AG04449 (cell line): ENCODE measurements at regions of chr6 and their contacts with region 1.

Region 1: DNA sequence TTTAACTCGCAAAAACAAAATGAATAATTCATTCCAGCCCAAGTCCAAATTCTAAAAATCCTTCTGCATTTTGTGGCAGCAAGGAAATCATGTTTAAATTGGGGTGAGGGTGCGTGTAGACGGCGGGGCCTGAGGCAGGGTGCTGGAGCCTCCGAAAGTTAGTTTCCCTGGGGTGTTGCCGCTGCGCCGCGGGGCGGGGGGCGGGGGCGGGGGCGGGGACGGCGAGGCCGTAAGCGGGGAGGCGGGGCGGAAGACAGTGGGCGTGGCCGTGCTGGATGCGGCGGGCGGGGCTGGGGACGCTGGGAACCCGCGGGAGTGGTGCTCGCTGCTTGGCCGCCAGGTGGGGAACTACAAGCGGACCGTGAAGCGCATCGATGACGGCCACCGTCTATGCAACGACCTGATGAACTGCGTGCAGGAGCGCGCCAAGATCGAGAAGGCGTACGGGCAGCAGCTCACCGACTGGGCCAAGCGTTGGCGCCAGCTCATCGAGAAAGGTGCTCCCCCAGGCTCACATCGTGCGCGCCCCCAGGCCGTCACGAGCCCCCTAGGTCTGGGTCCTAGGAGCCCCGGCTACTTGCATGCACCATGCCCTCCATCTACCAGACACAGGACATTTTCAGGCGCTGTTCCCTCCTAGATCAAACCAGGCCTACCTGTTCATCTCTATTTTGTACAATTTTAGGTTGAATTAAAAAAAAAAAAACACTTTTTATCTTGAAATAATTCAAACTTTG is 29.0 kb downstream of the SPDEF start:
- DNase-seq: peak; percentile 26
- H3K4me3 ChIP-seq: peak overlapping the region; percentile 48
- CTCF ChIP-seq: peak; percentile 90

Region 2: GRCh38 chr6:34496103-34496685 is 31.0 kb before region 1 on chr6:
- CTCF ChIA-PET with region 1: interaction called, 10 read pairs
- POLR2A ChIA-PET with region 1: no interaction called
- DNase-seq: no peak
- H3K4me3 ChIP-seq: no peak overlapping the region
- CTCF ChIP-seq: no peak

Region 3: GRCh38 chr6:34514593-34515472 is 12.3 kb before region 1 on chr6:
- CTCF ChIA-PET with region 1: interaction called, 42 read pairs
- POLR2A ChIA-PET with region 1: no interaction called
- DNase-seq: no peak
- H3K4me3 ChIP-seq: no peak overlapping the region
- CTCF ChIP-seq: no peak

Region 4: DNA sequence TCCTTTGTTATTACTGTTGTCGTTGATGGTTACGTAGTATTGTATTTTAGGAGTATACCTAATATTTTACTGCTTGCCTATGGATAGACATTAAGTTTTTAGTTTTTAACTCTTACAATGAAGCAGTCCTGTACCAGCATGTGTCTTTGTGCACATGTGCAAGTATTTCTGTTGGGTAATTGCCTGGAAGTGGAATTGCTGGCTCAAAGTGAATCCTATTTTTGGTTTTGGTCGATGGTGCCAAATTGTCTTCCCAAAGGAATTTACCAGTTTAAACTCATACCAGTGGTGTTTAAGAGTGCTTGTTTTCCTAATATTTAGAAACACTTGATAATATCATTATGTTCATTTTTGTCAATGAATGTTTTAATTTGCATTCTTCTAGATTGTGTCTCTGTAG is 437.4 kb after region 1 on chr6:
- CTCF ChIA-PET with region 1: no interaction called
- POLR2A ChIA-PET with region 1: no interaction called
- DNase-seq: no peak
- H3K4me3 ChIP-seq: no peak overlapping the region
- CTCF ChIP-seq: no peak